Activated T-helper 2 cell treated with anti-CD3 and anti-CD28 coated beads, Interferon-gamma antibody, Interleukin-2, Interleukin-4, amounts not matched to agents 10 μg/mL and 5 μg/mL and 100 μg/mL, durations not matched to agents 14 hours and 24 hours and 36 hours (primary cell): ENCODE measurements at regions of chr4 and their contacts with region 1.

Region 1: DNA sequence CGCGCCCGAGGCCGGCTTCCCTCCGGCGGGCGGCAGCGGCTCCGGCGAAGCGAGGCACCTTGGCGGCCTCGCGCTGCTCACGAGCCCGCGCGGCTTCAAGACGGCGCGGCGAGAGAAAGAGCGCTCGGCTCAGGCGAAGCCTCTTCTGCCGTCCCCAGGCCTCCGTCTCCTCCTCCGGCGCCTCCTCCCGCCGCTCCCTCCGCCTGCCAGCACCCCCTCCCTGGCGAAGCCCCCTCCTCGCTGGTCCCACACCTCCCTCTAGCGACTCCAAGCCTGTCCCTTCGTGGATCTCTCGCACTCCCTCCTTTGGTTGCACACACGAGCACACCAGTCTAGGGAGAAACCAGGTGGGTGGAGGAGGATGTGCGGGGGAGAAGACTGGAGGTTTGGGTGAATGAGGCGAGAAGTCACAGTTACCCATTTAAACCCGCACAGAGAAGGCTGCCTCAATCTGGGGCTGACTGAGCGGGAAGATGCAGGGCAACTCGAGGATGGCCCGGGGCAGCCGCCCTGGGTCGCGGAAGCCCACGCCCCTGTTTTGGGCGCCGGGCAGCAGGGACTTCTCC is at the start of gene CAMK2D:
- DNase-seq: peak; percentile 77
- H3K4me3 Mint-ChIP-seq: peak within 1 kb of the TSS; percentile 93
- H3K27ac Mint-ChIP-seq: peak within 1 kb of the TSS; percentile 92
- H3K4me1 Mint-ChIP-seq: peaks cover 47% of the 10 kb centered on the region
- H3K27me3 Mint-ChIP-seq: no peaks in the 10 kb centered on the region
- total RNA-seq, gene CAMK2D: 58.4 and 61.3 TPM in 2 replicates

Region 2: DNA sequence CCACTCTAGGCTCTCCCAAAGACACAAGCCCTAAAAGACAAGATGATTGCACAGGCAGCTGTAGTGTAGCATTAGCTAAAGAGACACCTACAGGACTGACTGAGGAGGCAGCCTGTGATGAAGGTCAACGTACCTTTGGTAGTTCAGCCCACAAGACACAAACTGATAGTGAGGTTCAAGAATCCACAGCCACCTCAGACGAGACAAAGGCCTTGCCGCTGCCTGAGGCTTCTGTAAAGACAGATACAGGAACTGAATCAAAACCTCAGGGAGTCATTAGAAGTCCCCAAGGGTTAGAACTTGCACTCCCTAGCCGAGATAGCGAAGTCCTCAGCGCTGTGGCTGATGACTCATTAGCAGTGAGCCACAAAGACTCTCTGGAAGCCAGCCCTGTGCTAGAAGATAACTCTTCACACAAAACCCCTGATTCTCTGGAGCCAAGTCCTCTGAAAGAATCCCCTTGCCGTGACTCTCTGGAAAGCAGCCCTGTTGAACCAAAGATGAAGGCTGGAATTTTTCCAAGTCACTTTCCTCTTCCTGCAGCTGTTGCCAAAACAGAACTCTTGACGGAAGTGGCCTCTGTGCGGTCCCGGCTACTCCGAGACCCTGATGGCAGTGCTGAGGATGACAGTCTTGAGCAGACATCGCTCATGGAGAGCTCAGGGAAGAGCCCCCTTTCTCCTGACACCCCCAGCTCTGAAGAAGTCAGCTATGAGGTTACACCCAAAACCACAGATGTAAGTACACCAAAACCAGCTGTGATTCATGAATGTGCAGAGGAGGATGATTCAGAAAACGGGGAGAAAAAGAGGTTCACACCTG is 405.9 kb before region 1 on chr4:
- intact Hi-C with region 1: loop called (anchors 1 kb)
- DNase-seq: peak; percentile 79
- H3K4me3 Mint-ChIP-seq: peak overlapping the region; percentile 60
- H3K27ac Mint-ChIP-seq: peak overlapping the region; percentile 89
- H3K4me1 Mint-ChIP-seq: peaks cover 42% of the 10 kb centered on the region
- H3K27me3 Mint-ChIP-seq: peaks cover 54% of the 10 kb centered on the region

Region 3: DNA sequence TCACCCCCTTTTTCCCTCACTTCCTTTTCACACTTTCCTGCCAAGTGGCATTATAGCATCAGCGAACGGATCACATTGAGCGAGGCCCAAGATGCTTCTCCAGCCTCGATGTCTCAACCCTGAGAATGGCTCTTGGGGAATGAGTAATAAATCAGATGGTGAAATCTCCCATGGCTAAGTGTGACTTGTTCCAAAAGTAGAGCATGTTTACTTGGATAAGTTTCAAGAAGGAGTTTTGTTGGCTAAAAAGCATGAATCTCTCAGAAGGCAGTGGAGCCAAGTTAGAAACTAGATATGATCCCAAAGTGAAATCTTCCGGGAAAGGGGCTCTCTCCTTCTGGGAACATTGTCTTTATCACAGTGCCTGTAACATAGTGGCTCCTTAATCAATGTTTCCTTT is 316.4 kb before region 1 on chr4:
- intact Hi-C with region 1: loop called (anchors 1 kb)
- DNase-seq: no peak
- H3K4me3 Mint-ChIP-seq: no peak overlapping the region
- H3K27ac Mint-ChIP-seq: peak overlapping the region; percentile 80
- H3K4me1 Mint-ChIP-seq: peaks cover 25% of the 10 kb centered on the region
- H3K27me3 Mint-ChIP-seq: no peaks in the 10 kb centered on the region

Region 4: GRCh38 chr4:113547487-113548042 is 214.1 kb before region 1 on chr4:
- intact Hi-C with region 1: loop called (anchors 1 kb)
- DNase-seq: peak; percentile 90
- H3K4me3 Mint-ChIP-seq: no peak overlapping the region
- H3K27ac Mint-ChIP-seq: peak overlapping the region; percentile 3
- H3K4me1 Mint-ChIP-seq: peaks cover 30% of the 10 kb centered on the region
- H3K27me3 Mint-ChIP-seq: no peaks in the 10 kb centered on the region

Region 5: DNA sequence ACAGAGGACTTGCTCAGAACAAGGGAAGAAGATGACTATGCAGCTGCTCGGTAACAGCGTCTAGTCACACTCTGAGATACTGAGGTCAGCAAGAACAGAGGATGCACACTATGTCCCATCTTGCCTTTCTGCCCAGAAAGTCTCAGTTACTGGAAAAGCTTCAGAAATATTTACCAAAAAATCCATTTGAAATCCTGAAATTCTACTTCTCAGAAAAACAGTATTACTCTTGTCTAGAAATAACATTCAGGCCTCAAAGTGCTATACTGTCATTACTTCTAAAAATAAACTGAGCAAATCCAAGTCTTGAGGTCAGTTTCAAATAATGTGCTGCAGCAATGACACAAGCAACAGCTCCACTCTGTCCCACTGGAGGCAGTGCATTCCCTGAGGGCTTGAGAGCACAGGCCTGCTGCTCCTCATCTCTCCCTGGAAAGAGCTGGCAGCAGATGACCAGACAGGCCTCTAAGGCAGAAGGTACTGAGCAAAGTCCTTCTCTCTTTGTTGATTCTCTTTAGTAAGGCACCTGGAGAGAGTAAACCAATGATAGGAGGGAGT is 77.1 kb before region 1 on chr4:
- intact Hi-C with region 1: loop called (anchors 1 kb)
- DNase-seq: no peak
- H3K4me3 Mint-ChIP-seq: peak overlapping the region; percentile 11
- H3K27ac Mint-ChIP-seq: peak overlapping the region; percentile 85
- H3K4me1 Mint-ChIP-seq: peaks cover 57% of the 10 kb centered on the region
- H3K27me3 Mint-ChIP-seq: no peaks in the 10 kb centered on the region

Region 6: DNA sequence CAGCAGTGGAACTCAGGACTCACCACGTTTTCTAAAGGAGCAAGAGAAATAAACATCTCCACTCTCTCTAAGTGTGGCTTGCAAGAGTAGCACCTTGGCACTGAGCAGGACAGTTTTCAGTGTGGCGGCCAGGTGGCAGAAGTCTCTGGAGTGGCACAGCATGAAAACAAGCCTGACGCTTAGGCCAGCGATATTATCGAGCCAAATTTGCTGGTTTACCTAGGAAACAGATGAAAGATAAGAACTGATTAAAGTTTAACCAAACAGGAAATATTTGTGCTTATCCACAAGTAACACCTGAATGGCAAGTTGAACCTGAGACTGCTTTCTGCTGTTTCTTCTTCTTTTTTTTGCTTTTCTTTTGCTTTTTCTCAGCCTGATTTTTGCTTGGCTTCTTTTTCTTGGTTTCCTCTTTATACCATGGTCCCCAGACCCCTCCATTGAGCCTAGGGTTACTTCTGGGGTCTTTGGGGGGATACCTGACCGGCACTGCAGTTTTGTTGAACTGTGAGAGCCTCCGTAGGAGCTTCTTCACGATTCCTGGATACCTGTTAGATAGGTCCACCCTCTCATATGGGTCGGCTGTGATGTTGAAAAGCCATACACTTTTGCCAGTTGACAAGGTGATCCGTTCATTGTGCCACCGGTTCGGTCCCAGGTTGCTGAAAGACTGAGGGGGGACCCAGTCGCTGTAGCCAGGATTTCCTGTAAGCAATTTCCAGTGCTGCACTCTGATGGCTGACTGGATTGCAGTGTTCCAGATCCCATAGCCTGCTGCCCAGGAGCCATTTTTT is 140.5 kb after region 1 on chr4:
- intact Hi-C with region 1: loop called (anchors 2 kb)
- DNase-seq: peak; percentile 51
- H3K4me3 Mint-ChIP-seq: peak overlapping the region; percentile 30
- H3K27ac Mint-ChIP-seq: peak overlapping the region; percentile 42
- H3K4me1 Mint-ChIP-seq: peaks cover 43% of the 10 kb centered on the region
- H3K27me3 Mint-ChIP-seq: no peaks in the 10 kb centered on the region